Calu3 (cell line): ENCODE measurements at regions of chr14 and their contacts with region 1.

Region 1: GRCh38 chr14:23865502-23865901 is 88.1 kb upstream of the DHRS4 start:
- DNase-seq: no peak
- H3K4me3 Mint-ChIP-seq: no peak overlapping the region
- H3K27ac Mint-ChIP-seq: no peak overlapping the region
- H3K4me1 Mint-ChIP-seq: peaks cover 8% of the 10 kb centered on the region
- H3K27me3 Mint-ChIP-seq: peaks cover 69% of the 10 kb centered on the region
- CTCF ChIP-seq: no peak

Region 2: DNA sequence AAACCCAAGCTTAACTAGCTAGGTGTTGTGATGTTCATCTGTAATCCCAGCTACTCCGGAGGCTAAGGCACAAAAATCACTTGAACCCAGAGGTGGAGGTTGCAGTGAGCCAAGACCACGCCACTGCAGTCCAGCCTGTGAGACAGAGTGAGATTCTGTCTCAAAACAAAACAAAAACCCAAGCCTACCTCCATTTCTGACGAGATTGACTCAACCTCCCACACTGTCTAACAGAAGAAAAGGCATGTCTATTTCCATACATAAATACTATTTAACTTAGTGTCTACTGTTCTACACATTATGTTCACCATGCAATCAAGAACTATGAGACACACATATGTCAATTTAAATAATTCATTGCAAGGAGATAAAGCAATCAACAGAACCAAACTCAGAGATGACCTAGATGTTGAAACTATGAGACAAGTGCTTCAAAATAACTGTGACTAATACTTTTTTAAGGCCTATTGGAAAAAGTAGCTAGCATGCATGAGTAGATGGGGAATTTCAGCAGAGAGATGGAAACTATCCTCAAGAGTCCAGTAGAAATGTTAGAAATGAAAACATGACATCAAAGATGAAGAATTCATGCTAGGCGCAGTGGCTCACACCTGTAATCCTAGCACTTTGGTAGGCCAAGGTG is 12.2 kb after region 1 on chr14:
- CTCF ChIA-PET with region 1: interaction called, 10 read pairs
- intact Hi-C with region 1: no loop called
- DNase-seq: no peak
- H3K4me3 Mint-ChIP-seq: no peak overlapping the region
- H3K27ac Mint-ChIP-seq: no peak overlapping the region
- H3K4me1 Mint-ChIP-seq: no peaks in the 10 kb centered on the region
- H3K27me3 Mint-ChIP-seq: no peaks in the 10 kb centered on the region
- CTCF ChIP-seq: no peak